ENCODE measurements at regions of chr10 and their contacts with region 1.

Region 1: DNA sequence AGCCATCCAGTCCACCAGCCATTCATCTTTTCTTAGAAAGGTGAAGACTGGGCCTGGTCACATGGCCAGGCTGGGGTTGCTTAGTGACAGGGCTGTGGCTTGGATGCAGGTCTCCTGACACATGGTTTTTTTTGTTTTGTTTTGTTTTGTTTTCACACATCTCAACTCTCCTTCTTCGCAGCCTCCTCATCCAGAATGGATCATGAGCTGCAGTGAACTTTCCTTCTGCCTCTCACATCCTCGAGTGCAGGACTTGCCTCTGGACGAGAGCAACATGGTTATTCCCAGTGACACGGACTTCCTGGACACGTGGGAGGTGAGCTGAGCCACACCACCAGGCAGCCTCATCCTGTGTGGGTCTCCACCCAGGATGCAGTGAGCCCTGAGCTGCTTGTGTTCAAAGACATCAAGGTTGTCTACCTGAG is 9.5 kb downstream of the AKR1E2 start:
- DNase-seq: peak in 15 of 35 experiments; percentile 7 to 45 (median 17)
- ATAC-seq: peak; percentile 77 to 90 (median 88)
- H3K4me3 ChIP-seq: no peak overlapping the region
- H3K4me3 Mint-ChIP-seq: peak overlapping the region in 1 of 3 donors; percentile 35
- H3K27ac ChIP-seq: peak overlapping the region; percentile 62
- H3K27ac Mint-ChIP-seq: peak overlapping the region; percentile 92 to 95
- H3K4me1 ChIP-seq: peaks cover 12 to 29% of the 10 kb centered on the region in 2 experiments
- H3K4me1 Mint-ChIP-seq: peaks cover 27 to 48% (median 46%) of the 10 kb centered on the region in 3 donors
- H3K27me3 ChIP-seq: peaks cover 0 to 3% of the 10 kb centered on the region in 2 experiments
- H3K27me3 Mint-ChIP-seq: peaks cover 0 to 10% of the 10 kb centered on the region in 2 donors

Region 2: DNA sequence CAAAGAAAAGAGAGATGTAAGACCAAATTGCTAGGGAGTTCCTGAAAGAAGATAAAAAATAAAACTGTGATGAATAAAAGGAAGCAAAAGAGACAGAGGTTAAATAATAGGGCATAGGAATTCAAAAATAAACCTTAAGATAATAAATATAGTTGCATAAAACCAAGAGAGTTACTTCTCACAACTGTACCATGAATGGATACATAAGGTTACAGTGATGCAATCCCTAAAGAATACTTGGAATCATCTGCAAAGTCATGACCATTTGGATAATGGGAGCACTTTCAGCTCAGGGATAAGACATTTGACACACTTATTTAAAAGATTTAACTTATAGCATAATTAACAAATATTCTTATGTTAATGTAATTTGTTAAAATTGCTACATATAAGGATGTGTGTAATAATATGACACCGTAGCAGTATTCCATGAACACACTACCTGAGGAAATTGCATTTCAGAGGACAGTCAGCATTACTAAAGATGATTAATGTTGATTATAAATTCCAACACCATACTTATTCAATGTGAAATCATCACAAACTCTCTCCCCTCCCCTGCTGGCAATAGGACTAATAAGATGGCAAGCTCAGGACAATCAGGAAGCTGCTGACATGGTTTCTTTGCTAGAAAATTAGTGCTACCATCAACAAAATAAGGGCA is 211.6 kb before region 1 on chr10:
- CTCF ChIA-PET with region 1: no interaction called
- POLR2A ChIA-PET with region 1: no interaction called
- DNase-seq: no peak
- ATAC-seq: no peak
- H3K4me3 ChIP-seq: no peak overlapping the region
- H3K4me3 Mint-ChIP-seq: no peak overlapping the region
- H3K27ac ChIP-seq: no peak overlapping the region
- H3K27ac Mint-ChIP-seq: no peak overlapping the region
- H3K4me1 ChIP-seq: no peaks in the 10 kb centered on the region
- H3K4me1 Mint-ChIP-seq: no peaks in the 10 kb centered on the region
- H3K27me3 ChIP-seq: peaks cover 0 to 6% of the 10 kb centered on the region in 2 experiments
- H3K27me3 Mint-ChIP-seq: no peaks in the 10 kb centered on the region

Region 3: DNA sequence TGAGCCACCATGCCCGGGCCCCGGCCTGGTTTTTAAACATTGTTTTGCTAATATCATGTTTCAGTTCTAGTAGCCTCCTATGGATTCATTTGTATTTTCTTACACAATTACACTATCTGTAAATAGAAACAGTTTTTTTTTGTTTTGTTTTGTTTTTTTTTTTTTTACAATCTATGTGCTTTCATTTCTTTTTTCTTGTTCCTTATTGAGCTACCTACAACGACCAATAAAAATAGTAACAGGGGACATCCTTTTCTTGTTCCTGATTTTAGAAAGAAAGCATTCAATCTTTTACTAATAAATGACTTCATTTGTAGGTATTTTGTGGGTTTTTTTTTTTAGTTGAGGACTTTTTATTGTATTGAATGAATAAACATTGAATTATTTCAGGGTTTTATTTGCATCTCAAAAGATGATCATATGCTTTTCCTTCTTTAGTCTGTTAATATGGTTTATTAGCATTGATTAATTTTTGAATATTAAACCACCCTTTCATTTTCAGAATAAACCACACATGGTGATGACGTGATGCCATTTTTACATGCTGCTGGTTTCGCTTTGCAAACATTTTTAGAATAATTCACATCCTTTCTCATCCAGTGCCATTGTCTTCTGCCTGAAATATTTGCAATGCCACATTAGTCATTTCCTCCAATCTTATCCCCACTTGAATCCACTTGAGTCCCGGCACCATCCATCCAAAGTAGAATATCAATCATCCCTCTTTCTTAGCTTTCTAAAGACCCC is 27.6 kb before region 1 on chr10:
- CTCF ChIA-PET with region 1: no interaction called
- POLR2A ChIA-PET with region 1: no interaction called
- DNase-seq: no peak
- ATAC-seq: no peak
- H3K4me3 ChIP-seq: no peak overlapping the region
- H3K4me3 Mint-ChIP-seq: no peak overlapping the region
- H3K27ac ChIP-seq: no peak overlapping the region
- H3K27ac Mint-ChIP-seq: no peak overlapping the region
- H3K4me1 ChIP-seq: no peaks in the 10 kb centered on the region
- H3K4me1 Mint-ChIP-seq: no peaks in the 10 kb centered on the region
- H3K27me3 ChIP-seq: peaks cover 0 to 7% of the 10 kb centered on the region in 2 experiments
- H3K27me3 Mint-ChIP-seq: peaks cover 0 to 8% of the 10 kb centered on the region in 2 donors

Region 4: DNA sequence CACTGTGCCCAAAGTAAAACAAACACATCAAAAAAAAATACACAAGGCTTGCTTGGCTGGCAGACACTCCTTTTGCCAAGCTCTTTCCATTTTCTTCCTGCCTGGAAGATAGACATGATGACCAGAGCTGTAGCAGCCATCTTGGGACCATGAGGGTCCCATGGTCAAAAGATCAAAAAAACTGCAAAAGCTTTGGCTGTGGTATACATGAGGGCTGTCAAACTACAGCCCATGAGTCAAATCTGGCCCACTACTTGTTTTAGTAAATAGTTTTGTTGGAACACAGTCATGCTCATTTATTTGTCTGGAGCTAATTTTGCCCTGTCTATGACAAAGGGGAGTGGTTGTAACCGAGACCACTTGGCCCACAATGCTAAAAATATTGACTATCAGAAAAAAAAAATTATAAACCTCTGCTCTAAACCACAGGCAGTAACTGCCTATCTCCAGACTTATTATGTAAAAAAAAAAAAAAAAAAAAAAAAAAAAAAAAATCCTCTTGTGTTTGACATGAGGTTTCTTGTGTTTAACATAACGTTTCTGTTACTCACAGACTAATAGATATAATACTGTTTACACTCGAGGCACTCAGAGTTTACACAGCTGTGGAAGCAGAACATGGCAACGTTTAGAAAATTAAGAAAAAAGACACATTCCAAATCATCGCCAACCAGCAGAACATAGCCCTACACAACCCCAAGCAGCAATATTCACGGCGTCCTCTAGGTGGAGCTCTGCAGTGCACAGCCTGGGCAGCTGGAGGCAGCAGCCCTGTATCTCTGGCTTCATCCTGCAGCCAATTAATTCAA is 794.0 kb after region 1 on chr10:
- CTCF ChIA-PET with region 1: no interaction called
- POLR2A ChIA-PET with region 1: interaction called in 1 of 2 experiments, 11 read pairs
- DNase-seq: peak; percentile 51 to 90 (median 77)
- ATAC-seq: peak; percentile 93 to 98 (median 97)
- H3K4me3 ChIP-seq: no peak overlapping the region
- H3K4me3 Mint-ChIP-seq: peak overlapping the region in 1 of 3 donors; percentile 26
- H3K27ac ChIP-seq: no peak overlapping the region
- H3K27ac Mint-ChIP-seq: no peak overlapping the region
- H3K4me1 ChIP-seq: peaks cover 8 to 11% of the 10 kb centered on the region in 2 experiments
- H3K4me1 Mint-ChIP-seq: peaks cover 8 to 19% (median 16%) of the 10 kb centered on the region in 3 donors
- H3K27me3 ChIP-seq: peaks cover 0 to 11% of the 10 kb centered on the region in 2 experiments
- H3K27me3 Mint-ChIP-seq: peaks cover 3% of the 10 kb centered on the region in 2 donors

Measured in T-cell (primary cell).